Activated CD4-positive, alpha-beta T cell treated with anti-CD3 and anti-CD28 coated beads for 36 hours (primary cell): ENCODE measurements at regions of chr9 and their contacts with region 1.

Region 1: DNA sequence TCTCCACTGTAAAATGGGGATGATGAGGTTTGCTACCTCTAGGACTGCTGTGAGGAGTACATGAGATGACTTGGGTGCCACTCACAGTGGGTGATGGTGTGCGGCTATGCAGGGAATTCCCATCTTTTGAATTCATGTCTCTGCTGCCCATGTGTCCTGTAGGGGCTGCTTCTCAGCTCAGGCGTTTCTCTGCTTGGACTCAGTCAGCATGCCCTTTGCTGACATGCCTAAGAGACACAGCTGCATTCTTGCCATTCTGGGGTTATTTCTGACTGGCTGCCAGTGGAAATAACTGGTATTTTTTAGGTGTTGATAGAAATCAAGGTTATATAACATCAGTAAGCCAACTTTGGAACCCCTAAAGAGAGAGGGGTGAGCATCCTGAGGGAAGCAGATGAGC is 24.3 kb upstream of the XPA start:
- DNase-seq: no peak
- ATAC-seq: no peak
- H3K4me3 Mint-ChIP-seq: no peak overlapping the region
- H3K27ac Mint-ChIP-seq: no peak overlapping the region
- H3K4me1 Mint-ChIP-seq: no peaks in the 10 kb centered on the region
- H3K27me3 Mint-ChIP-seq: peaks cover 14% of the 10 kb centered on the region

Region 2: DNA sequence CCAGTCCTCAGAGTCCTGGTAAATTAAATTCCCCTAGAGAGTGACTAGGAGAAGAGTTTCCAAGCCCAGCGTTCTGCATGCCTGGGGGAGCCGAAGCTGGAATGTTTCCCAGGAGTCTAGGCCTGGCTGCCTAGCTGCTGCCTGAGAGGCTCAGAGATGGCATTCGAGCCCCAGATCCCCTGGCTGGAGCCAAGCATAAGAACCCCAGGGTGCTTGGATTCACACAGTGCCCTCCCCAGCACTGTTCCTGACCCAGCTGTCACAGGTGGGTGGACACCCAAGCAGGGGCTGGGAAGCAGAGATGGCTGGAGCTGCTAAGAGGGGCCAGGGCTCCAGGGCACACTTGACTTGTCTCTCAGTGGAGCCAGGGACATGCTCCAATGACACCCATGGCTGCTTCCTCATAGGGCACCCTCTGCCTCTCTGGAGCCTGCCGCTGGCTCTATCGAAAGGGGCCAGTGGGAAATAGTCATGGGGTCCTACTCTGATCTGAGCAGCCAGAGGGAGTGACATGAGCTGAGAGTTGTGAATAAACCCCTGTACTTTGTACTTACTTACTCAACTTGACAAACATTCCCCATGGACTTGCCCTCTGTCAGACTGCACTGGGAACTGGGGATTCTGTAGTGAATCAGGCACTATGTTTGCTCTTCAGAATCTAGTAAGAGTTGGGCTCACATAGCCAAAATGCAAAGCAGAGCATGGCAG is 38.3 kb after region 1 on chr9:
- CTCF ChIA-PET with region 1: no interaction called
- POLR2A ChIA-PET with region 1: no interaction called
- intact Hi-C with region 1: loop called in 1 of 2 experiments (anchors 5 kb)
- DNase-seq: no peak
- ATAC-seq: no peak
- H3K4me3 Mint-ChIP-seq: no peak overlapping the region
- H3K27ac Mint-ChIP-seq: no peak overlapping the region
- H3K4me1 Mint-ChIP-seq: no peaks in the 10 kb centered on the region
- H3K27me3 Mint-ChIP-seq: peaks cover 26% of the 10 kb centered on the region